OCI-LY7 (cell line): ENCODE measurements at regions of chr10 and their contacts with region 1.

Region 1: DNA sequence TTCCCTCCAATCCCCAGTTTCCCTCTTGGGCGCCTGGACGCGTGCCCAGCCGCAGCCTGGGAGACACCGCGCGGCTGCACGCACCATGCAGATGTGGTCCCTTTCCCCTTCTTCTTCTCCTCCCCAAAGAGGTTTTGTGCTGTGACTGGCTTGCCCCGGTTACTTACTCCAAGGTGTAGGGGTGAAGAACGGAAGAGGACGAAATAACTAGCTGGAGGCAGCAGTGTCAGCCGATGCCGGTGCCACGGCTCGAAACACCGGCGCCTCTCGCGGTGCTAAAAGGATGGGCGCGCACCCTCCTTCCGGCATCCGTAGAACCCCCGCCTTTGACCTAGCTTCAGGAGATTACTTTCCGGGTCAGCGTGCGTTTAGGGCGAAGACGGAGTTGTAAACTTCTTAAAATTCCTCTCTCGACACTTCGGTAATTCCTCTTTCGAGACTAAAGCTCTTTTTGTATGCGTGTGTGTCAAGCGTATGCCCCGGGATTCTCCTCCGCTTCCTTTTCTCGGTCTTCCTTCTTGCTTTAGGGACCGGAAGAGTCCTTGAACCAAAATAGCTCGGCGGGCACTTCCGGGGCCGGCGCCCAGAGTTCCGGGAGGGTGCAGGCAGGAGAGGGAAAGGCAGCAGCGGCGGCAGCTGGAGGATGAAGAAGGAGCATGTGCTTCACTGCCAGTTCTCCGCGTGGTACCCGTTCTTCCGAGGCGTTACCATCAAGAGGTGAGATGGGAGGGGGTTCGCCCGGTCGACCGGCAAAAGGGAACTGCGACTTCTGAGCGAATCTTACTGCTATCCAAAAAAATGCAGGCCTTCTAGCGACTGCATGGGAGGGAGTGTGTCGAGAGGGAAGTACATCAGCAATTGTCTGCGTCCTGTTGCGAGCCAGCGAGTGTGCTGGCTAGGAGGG is at the starts of genes CDC123 and NUDT5:
- DNase-seq: peak; percentile 93
- H3K4me3 ChIP-seq: peak within 1 kb of the TSS; percentile 97
- H3K27ac ChIP-seq: peak within 1 kb of the TSS; percentile 88
- H3K4me1 ChIP-seq: peaks cover 38% of the 10 kb centered on the region
- CTCF ChIP-seq: no peak
- total RNA-seq, gene CDC123: 138 and 168 TPM in 2 replicates
- total RNA-seq, gene NUDT5: 55.7 and 70.2 TPM in 2 replicates

Region 2: GRCh38 chr10:11993834-11994468 is 201.9 kb before region 1 on chr10:
- CTCF ChIA-PET with region 1: no interaction called
- POLR2A ChIA-PET with region 1: interaction called, 3 read pairs
- intact Hi-C with region 1: loop called (anchors 5 kb)
- DNase-seq: peak; percentile 88
- H3K4me3 ChIP-seq: peak overlapping the region; percentile 29
- H3K27ac ChIP-seq: peak overlapping the region; percentile 95
- H3K4me1 ChIP-seq: peaks cover 65% of the 10 kb centered on the region
- CTCF ChIP-seq: no peak

Region 3: DNA sequence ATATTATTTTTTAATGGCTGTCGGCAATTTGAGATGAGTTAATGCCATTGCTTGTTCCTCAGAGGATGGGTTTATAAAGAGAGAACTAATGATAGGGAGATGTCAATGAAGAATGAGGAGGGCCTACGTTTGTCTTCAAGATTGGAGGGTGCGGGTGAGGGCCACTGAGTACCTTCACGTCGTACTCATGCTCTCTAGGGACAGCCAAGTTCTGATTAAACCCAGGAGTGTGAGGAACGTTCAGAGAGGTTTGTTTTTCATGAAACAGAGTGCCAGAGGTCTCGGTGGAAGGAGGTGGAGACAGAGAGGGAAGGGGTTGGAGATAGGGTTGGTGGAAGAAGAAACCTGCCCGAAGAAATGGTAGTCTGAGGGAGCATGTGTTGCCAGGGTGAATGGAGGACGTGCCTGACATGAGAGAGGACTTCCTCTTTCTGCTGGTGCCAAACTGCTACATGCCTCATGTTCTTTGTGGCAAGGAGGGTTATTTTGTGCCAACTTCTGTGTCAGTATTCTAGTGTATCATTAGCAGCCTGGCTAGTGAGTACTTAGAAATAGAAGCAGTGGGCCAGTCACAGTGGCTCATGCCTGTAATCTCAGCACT is 118.2 kb before region 1 on chr10:
- CTCF ChIA-PET with region 1: no interaction called
- POLR2A ChIA-PET with region 1: interaction called, 4 read pairs
- intact Hi-C with region 1: loop called (anchors 10 kb)
- DNase-seq: peak; percentile 65
- H3K4me3 ChIP-seq: peak overlapping the region; percentile 6
- H3K27ac ChIP-seq: peak overlapping the region; percentile 63
- H3K4me1 ChIP-seq: peaks cover 63% of the 10 kb centered on the region
- CTCF ChIP-seq: no peak

Region 4: GRCh38 chr10:12214763-12215218 is 18.9 kb after region 1 on chr10:
- CTCF ChIA-PET with region 1: interaction called, 3 read pairs
- POLR2A ChIA-PET with region 1: interaction called, 10 read pairs
- intact Hi-C with region 1: no loop called
- DNase-seq: peak; percentile 76
- H3K4me3 ChIP-seq: no peak overlapping the region
- H3K27ac ChIP-seq: peak overlapping the region; percentile 7
- H3K4me1 ChIP-seq: peaks cover 23% of the 10 kb centered on the region
- CTCF ChIP-seq: peak; percentile 100

Region 5: DNA sequence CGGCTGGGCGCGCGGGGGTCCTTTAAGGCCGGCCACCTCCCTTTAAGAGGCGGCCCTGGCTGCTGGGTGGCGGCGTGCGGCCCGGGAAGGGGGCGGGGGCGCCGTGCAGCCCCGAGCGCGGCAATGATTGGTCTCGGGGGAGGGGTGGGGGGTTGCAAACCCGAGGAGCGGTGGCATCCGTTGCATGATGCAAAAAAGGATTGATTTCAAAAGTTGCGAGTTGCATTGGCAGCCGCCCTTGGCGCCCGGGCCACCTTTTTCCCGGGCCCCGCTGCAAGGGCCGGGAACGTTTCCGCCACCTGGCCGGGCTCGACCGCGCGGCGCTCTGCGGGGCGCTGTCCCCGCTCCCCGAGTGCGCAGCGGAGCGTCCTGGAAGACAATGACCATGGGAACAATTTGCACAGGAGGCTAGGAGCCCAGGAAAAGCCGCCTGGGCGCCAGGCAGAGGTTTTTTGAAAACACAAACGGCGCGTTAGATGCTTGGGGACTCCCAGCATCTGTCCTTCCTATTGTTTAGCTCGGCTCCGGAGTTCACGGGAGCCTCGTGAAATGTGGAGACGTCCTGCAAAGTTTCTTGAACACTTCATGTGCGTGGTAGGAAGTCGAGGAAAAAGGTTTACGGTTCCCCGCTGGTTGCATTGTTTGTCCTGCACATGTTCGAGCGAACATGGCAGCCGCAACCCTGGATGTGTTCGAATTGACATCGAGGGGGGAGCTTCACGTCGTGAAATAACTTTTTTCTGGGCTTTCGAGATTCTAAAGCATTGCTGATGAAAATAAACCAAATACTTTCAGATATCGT is 1152.6 kb after region 1 on chr10 and contains the start of gene SEPHS1:
- CTCF ChIA-PET with region 1: no interaction called
- POLR2A ChIA-PET with region 1: no interaction called
- intact Hi-C with region 1: loop called (anchors 10 kb)
- DNase-seq: peak; percentile 92
- H3K4me3 ChIP-seq: peak within 1 kb of the TSS; percentile 86
- H3K27ac ChIP-seq: peak within 1 kb of the TSS; percentile 95
- H3K4me1 ChIP-seq: peaks cover 44% of the 10 kb centered on the region
- CTCF ChIP-seq: 0 out of 2 replicates have a peak, but pooled peaks have one; percentile 36
- total RNA-seq, gene SEPHS1: 72.7 and 115 TPM in 2 replicates